ENCODE measurements at regions of chr10 and their contacts with region 1.

Region 1: DNA sequence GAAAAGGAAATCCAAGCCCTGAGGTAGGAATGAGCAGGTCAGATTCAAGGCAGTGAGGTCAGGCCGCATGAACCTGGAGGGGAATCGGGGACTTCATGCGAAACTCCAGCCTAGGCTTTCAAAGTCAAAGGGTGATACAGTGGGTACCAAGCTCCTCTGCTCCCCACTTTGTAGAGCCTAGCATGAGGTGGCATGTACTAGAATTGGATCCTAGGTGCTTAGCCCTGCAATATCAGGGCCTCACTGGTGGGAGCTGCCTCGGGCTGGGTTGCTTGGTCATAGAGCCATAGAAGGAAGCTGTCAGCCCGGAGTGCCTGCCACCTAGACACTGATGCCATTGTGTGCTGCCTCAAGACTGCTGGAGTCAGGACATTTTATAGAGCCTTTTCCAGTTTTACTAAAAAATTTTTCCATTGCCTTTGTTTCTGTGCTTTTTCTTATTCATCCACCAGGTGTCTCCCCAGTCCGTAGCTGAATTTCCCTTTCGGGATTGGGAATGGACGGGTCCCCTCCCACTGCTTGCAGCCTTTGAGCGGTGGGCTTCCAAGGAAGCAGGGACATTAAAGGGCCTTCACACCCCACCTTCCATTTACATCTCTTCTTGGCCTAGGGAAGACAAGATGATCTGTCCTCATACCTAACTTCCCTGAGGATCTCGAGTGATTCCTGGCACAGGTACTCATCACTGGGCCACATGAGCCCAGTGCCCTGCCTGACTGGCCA is 5.5 kb upstream of the LZTS2 start:
- DNase-seq: peak in 1 of 7 donors; percentile 57
- H3K4me3 ChIP-seq: no peak overlapping the region
- H3K27ac ChIP-seq: peak overlapping the region in 2 of 5 donors; percentile 5 to 20
- H3K4me1 ChIP-seq: peaks cover 8 to 17% of the 10 kb centered on the region in 2 donors
- H3K27me3 ChIP-seq: no peaks in the 10 kb centered on the region
- CTCF ChIP-seq: peak; percentile 57 to 84 (median 77)
- POLR2A ChIP-seq: no peak

Region 2: DNA sequence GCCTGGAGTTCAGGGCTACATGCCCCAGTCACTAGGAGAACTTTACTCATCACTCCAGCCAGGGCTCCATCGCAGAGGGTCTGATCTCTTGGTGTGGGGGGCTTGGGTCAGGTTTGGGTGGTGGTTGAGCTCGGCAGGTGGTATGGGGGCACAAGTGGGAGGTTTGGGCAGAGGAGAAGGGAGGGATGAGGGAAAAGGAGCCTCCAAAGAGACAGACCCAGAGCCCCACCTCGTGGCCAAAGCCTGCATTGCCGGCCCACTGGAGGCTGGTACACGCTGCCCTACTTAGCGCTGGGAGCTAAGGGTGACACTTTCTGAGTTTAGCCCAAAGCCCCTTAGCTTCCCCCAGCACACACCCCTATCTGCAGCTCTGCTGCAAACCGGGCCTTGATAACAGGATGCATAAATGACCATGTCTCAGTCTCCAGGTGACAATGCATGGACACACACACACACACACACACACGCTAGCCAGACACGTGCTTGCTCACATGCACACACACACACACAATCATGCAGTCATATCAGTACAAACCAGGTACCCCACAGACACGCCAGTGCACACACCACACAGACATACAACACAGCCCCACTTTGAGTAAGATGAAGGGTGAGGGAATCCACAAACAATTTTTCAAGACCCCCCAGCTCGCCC is 20.2 kb after region 1 on chr10:
- intact Hi-C with region 1: loop called in 1 of 2 experiments (anchors 2 kb)
- DNase-seq: peak; percentile 74 to 93 (median 87)
- H3K4me3 ChIP-seq: no peak overlapping the region
- H3K27ac ChIP-seq: no peak overlapping the region
- H3K4me1 ChIP-seq: peaks cover 0 to 10% of the 10 kb centered on the region in 2 donors
- H3K27me3 ChIP-seq: no peaks in the 10 kb centered on the region
- CTCF ChIP-seq: peak; percentile 79 to 95 (median 88)
- POLR2A ChIP-seq: no peak